H1 (cell line): ENCODE measurements at regions of chr9 and their contacts with region 1.

Region 1: DNA sequence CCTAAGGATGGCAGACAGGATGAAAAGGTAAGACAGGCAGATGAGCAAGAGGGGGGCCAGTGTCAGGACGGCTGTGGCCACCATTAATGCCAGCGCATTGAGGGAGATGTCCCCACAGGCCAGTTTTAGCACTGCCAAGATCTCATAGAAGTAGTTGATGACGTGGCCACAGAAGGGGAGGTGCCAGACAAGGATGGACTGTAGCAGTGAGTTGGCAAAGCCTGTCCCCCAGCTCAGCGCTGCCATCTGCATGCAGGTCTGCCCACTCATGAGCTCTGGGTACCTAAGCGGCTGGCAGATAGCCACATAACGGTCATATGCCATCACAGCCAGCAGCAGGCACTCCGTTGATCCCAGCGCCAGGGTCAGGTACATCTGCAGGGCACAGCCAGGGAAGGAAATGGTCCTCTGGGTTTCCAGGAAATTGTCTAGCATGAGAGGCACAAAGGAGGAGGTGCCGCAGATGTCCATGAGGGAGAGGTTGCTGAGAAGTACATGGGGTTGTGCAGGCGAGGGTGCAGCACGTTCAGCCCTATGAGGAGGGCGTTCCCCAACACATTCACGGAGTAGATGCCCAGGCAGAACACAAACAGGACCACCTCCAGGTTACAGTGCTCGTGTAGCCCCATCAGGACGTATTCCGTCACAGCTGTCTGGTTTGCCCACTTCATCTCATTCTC is 10.8 kb downstream of the OR13J1 start:
- DNase-seq: peak in 1 of 2 experiments; percentile 43
- H3K4me3 ChIP-seq: no peak overlapping the region
- H3K27ac ChIP-seq: no peak overlapping the region
- H3K4me1 ChIP-seq: no peaks in the 10 kb centered on the region
- H3K27me3 ChIP-seq: no peaks in the 10 kb centered on the region; a peak in 1 of 7 replicates
- CTCF ChIP-seq: peak in 2 of 3 experiments; percentile 4; a peak in 2 of 4 replicates
- EP300 ChIP-seq: no peak
- POLR2A ChIP-seq: no peak
- RAD21 ChIP-seq: peak; percentile 7 to 13; a peak in 1 of 4 replicates

Region 2: DNA sequence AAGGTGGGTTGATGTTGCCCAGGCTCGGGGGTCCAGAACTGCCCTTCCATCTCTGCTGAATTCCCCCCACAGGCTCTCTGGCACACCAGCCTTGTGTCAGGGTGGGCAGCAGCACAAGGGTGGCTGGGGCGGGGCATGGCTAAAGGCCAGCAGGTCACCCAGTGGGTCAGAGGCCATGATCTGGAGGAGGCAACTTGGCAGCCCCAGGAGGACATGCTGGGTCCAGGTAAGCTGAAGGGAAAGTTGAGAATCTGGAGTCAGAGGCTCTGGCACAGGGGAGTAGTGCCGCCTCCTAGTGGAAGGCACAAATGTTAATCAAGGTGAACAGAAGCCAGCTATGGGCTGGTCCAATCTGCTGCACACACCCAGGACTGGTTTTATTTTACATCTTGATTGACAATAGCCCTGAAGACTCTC is 24.2 kb before region 1 on chr9:
- CTCF ChIA-PET with region 1: interaction called, 31 read pairs
- POLR2A ChIA-PET with region 1: interaction called, 5 read pairs
- DNase-seq: no peak
- H3K4me3 ChIP-seq: no peak overlapping the region
- H3K27ac ChIP-seq: no peak overlapping the region
- H3K4me1 ChIP-seq: no peaks in the 10 kb centered on the region; a peak in 2 of 7 replicates
- H3K27me3 ChIP-seq: no peaks in the 10 kb centered on the region; a peak in 1 of 7 replicates
- CTCF ChIP-seq: peak; percentile 55 to 82 (median 72)
- EP300 ChIP-seq: no peak
- POLR2A ChIP-seq: no peak
- RAD21 ChIP-seq: peak; percentile 50 to 66

Region 3: DNA sequence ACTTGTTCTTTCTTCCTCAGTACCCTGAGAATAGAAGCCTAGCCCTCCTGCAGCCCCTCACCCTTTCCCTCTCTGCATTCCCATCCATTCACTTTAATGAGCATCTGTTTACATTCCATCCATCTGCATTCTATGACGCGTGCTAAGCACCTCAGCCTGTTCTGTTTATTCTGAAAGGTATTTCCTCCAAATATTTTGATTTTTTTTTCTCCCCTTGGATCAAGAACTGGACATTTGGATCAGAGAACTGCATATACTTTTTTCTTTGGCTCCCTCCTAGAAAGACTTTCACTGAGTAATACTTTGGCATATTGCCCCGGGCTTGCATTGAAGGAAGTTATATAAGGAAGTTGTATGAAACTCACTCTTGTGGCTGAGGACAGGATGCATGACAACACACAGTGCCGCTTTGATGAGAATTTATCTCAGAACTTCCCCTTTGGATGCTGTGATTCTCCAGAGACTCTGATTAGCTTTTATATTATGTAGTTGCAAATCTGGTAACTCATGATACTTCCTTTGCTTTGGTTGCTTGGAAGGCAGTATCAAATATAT is 14.7 kb before region 1 on chr9:
- CTCF ChIA-PET with region 1: interaction called, 31 read pairs
- POLR2A ChIA-PET with region 1: interaction called, 43 read pairs
- DNase-seq: no peak
- H3K4me3 ChIP-seq: peak overlapping the region in 1 of 4 experiments; percentile 70; a peak in 2 of 8 replicates
- H3K27ac ChIP-seq: no peak overlapping the region
- H3K4me1 ChIP-seq: peaks cover 11 to 25% (median 14%) of the 10 kb centered on the region in 4 experiments
- H3K27me3 ChIP-seq: peaks cover 0 to 12% (median 9%) of the 10 kb centered on the region in 4 experiments; a peak in 6 of 7 replicates
- CTCF ChIP-seq: no peak
- EP300 ChIP-seq: no peak
- POLR2A ChIP-seq: no peak
- RAD21 ChIP-seq: no peak

Region 4: GRCh38 chr9:35869621-35870216 is 10.3 kb after region 1 on chr9:
- CTCF ChIA-PET with region 1: interaction called, 3 read pairs
- POLR2A ChIA-PET with region 1: interaction called, 14 read pairs
- DNase-seq: no peak
- H3K4me3 ChIP-seq: no peak overlapping the region
- H3K27ac ChIP-seq: no peak overlapping the region
- H3K4me1 ChIP-seq: peaks cover 0 to 8% (median 6%) of the 10 kb centered on the region in 4 experiments; a peak in 6 of 7 replicates
- H3K27me3 ChIP-seq: peaks cover 0 to 3% (median 0%) of the 10 kb centered on the region in 4 experiments; a peak in 1 of 7 replicates
- CTCF ChIP-seq: no peak
- EP300 ChIP-seq: no peak
- POLR2A ChIP-seq: no peak
- RAD21 ChIP-seq: no peak

Region 5: DNA sequence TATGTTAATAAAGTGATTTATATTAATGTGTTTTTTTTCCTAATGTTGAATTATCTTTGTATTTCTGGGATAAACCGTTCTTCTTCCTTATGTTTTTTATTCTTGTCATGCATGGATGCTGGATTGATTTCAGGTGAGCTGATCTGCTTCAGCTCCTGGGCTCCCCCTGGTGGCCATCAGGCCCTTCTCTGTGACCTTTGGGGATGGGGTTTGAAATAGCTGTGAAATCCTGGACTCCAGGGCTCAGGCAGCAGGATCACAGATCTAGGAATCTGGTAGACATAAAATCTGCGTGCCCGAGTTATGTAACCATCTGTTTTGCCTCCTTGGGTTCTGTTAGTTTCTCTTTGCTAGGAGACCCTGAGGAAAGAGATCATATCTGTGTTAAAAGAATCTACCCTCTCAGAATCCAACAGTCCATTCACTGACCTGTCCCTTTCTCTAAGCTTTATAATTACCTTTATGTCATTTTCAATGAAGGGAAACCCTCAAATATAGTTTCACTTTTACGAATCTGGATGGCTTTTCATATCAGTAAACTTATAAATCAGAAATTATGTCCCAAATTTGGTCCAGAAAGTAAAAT is 22.9 kb after region 1 on chr9:
- CTCF ChIA-PET with region 1: interaction called, 25 read pairs
- POLR2A ChIA-PET with region 1: interaction called, 3 read pairs
- DNase-seq: peak; percentile 46 to 91
- H3K4me3 ChIP-seq: no peak overlapping the region
- H3K27ac ChIP-seq: no peak overlapping the region
- H3K4me1 ChIP-seq: no peaks in the 10 kb centered on the region; a peak in 2 of 7 replicates
- H3K27me3 ChIP-seq: no peaks in the 10 kb centered on the region
- CTCF ChIP-seq: peak; percentile 92 to 96 (median 95)
- EP300 ChIP-seq: no peak
- POLR2A ChIP-seq: no peak
- RAD21 ChIP-seq: peak; percentile 83 to 91

Region 6: GRCh38 chr9:35903049-35903448 is 43.6 kb after region 1 on chr9:
- CTCF ChIA-PET with region 1: interaction called, 10 read pairs
- POLR2A ChIA-PET with region 1: interaction called, 3 read pairs
- DNase-seq: no peak
- H3K4me3 ChIP-seq: no peak overlapping the region
- H3K27ac ChIP-seq: no peak overlapping the region
- H3K4me1 ChIP-seq: peaks cover 0 to 14% (median 10%) of the 10 kb centered on the region in 4 experiments; a peak in 6 of 7 replicates
- H3K27me3 ChIP-seq: 0 out of 7 replicates have a peak, but pooled peaks cover 0 to 2% (median 0%) of the 10 kb centered on the region in 4 experiments
- CTCF ChIP-seq: peak in 2 of 3 experiments; percentile 69 to 70; a peak in 3 of 4 replicates
- EP300 ChIP-seq: no peak
- POLR2A ChIP-seq: no peak
- RAD21 ChIP-seq: peak; percentile 68 to 72